HepG2 (cell line): ENCODE measurements at regions of chr2 and their contacts with region 1.

Region 1: DNA sequence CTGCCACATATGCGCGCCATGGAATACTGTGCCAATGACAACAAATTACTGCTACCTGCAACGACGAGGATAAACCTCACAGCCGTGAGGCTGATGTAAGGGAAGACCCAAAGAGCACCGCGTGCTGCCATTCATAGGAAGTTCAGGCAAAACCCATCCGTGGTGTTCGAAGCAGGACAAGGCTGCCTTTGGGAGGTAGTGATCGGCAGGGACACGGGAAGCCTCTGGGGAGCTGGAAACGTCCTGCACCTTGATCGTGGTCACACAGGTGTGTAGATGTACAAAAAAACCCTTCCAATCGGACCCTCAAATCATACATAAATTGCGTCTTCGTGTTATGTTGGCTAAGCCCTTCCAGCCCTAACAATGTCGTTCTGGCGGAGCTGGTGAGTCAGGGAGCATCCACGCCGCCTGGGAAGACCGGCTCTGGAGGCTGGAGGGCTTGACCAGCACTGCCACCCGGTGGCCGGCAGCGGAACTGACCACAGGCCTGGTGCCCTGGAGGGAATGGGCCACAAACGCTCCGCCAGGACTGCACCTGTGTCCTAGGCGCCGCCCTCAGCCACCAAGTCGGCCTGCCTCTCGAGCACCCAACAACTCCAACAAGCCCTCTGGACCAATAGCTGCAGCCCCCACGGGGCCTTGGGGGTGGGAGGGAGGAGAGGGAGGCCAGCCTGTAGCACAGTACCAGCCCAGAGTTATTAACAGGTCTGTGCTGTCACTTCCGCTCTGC is 4.1 kb upstream of the NEURL3 start:
- DNase-seq: peak; percentile 78
- ATAC-seq: peak; percentile 79
- H3K4me3 ChIP-seq: peak overlapping the region in 1 of 3 experiments; percentile 36; a peak in 1 of 6 replicates
- H3K27ac ChIP-seq: no peak overlapping the region
- H3K4me1 ChIP-seq: peaks cover 51% of the 10 kb centered on the region
- H3K27me3 ChIP-seq: peaks cover 0 to 37% of the 10 kb centered on the region in 2 experiments; a peak in 3 of 5 replicates
- CTCF ChIP-seq: peak; percentile 100
- EP300 ChIP-seq: no peak; a peak in 1 of 4 replicates
- POLR2A ChIP-seq: no peak
- RAD21 ChIP-seq: peak; percentile 100

Region 2: DNA sequence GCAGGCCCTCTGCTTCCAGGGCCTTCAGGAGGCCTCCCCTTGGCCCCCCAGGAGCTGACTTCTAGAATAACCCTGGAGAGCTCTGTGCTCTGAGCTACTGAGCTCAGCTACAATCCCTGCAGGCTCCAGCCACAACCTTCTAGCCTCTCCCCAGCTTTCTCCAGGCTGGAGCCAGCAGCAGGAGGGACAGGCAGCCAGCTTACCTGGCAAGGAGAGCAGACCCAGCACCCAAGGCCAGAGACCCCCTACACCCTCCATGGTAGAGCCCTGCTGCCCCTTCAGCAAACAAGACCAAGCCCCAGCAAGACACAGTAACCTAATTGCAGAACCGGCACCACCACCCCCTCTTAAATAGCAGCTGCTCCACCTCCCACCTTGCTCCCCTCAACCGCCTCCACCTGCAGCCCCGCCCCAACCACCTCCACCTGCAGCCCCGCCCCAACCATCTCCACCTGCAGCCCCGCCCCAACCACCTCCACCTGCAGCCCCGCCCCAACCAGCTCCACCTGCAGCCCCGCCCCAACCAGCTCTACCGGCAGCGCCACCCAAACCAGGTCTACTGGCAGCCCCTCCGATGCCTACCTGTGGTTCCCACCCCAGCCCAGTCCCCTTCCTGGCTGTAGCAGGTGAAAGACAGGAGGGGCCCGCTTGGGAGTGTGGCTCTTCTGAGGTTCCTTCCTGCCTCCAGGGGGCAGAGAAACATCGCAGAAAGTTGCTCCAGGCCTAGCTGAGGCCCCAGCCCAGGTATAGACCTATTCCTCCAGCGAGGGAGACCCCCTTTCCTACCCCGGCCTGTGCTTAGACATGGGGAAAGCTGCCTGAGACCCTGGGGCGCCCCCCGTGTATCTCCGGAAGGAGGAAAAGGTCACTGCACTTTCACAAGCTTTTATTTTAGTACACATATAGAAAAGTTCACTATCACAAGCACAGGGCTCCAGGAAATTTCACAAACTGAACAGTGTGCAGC is 370.8 kb before region 1 on chr2 and contains the start of gene ASTL:
- CTCF ChIA-PET with region 1: interaction called, 6 read pairs
- POLR2A ChIA-PET with region 1: no interaction called
- in situ Hi-C with region 1: loop called (anchors 25 kb)
- intact Hi-C with region 1: loop called (anchors 1 kb)
- DNase-seq: peak; percentile 56
- ATAC-seq: peak; percentile 84
- H3K4me3 ChIP-seq: no peak within 1 kb of the TSS
- H3K27ac ChIP-seq: no peak within 1 kb of the TSS
- H3K4me1 ChIP-seq: no peaks in the 10 kb centered on the region
- H3K27me3 ChIP-seq: peaks cover 20 to 62% of the 10 kb centered on the region in 2 experiments
- CTCF ChIP-seq: peak; percentile 87
- EP300 ChIP-seq: no peak
- POLR2A ChIP-seq: no peak
- RAD21 ChIP-seq: peak; percentile 79
- total RNA-seq, gene ASTL: not detected in 2 replicates

Region 3: DNA sequence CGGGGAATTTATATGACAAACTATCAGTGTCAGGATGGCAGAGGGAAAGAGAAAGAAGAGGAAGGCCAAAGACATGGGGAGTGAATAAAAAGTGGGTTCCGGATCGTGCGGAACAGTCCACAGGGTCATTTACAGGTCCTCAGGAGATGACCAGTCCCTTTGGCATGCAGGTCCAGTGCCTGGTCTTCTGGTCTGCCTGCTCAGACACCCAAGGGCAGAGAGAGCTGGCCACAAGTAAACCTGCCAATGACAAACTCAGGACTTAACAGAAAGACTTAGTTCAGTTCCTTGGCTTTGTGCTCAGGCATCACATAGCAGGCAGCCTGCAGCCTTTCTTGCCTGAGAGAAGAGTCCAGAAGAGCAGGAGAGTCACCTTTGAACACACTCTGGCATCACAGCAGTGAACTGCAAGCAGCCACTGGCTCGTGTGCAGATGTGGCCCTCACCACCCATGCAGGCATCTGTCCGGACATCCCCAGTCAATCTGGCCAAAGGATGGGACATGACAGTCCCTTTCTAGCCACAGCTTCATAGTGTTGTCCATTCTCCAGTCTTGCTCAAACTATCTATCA is 257.5 kb before region 1 on chr2:
- CTCF ChIA-PET with region 1: no interaction called
- POLR2A ChIA-PET with region 1: no interaction called
- in situ Hi-C with region 1: no loop called
- intact Hi-C with region 1: loop called (anchors 5 kb)
- DNase-seq: peak; percentile 84
- ATAC-seq: peak; percentile 79
- H3K4me3 ChIP-seq: no peak overlapping the region
- H3K27ac ChIP-seq: no peak overlapping the region
- H3K4me1 ChIP-seq: peaks cover 25% of the 10 kb centered on the region
- H3K27me3 ChIP-seq: no peaks in the 10 kb centered on the region
- CTCF ChIP-seq: 0 out of 2 replicates have a peak, but pooled peaks have one; percentile 17
- EP300 ChIP-seq: 0 out of 4 replicates have a peak, but pooled peaks of 1 of the 2 experiments have one; percentile 18
- POLR2A ChIP-seq: 0 out of 4 replicates have a peak, but pooled peaks of 1 of the 2 experiments have one; percentile 17
- RAD21 ChIP-seq: peak; percentile 52; the same call in 1 of the 2 replicates

Region 4: GRCh38 chr2:96305091-96305978 is 203.9 kb before region 1 on chr2 and contains the start of gene SNRNP200:
- CTCF ChIA-PET with region 1: interaction called, 4 read pairs
- POLR2A ChIA-PET with region 1: no interaction called
- in situ Hi-C with region 1: no loop called
- intact Hi-C with region 1: loop called (anchors 1 kb)
- DNase-seq: peak; percentile 86
- ATAC-seq: peak; percentile 98
- H3K4me3 ChIP-seq: peak within 1 kb of the TSS; percentile 79 to 92 (median 91)
- H3K27ac ChIP-seq: peak within 1 kb of the TSS; percentile 75
- H3K4me1 ChIP-seq: peaks cover 37% of the 10 kb centered on the region
- H3K27me3 ChIP-seq: no peaks in the 10 kb centered on the region; a peak in 1 of 5 replicates
- CTCF ChIP-seq: peak; percentile 31
- EP300 ChIP-seq: no peak
- POLR2A ChIP-seq: peak; percentile 88 to 95
- RAD21 ChIP-seq: peak; percentile 37; the same call in 1 of the 2 replicates
- total RNA-seq, gene SNRNP200: 99.0 and 163 TPM in 2 replicates

Region 5: GRCh38 chr2:96413323-96413722 is 96.0 kb before region 1 on chr2:
- CTCF ChIA-PET with region 1: interaction called, 116 read pairs
- POLR2A ChIA-PET with region 1: interaction called, 15 read pairs
- in situ Hi-C with region 1: loop called (anchors 5 kb)
- intact Hi-C with region 1: no loop called
- DNase-seq: peak; percentile 46
- ATAC-seq: peak; percentile 81
- H3K4me3 ChIP-seq: peak overlapping the region; percentile 52 to 86 (median 62)
- H3K27ac ChIP-seq: no peak overlapping the region
- H3K4me1 ChIP-seq: peaks cover 54% of the 10 kb centered on the region
- H3K27me3 ChIP-seq: peaks cover 0 to 12% of the 10 kb centered on the region in 2 experiments; a peak in 2 of 5 replicates
- CTCF ChIP-seq: peak; percentile 33; the same call in 1 of the 2 replicates
- EP300 ChIP-seq: no peak
- POLR2A ChIP-seq: no peak
- RAD21 ChIP-seq: no peak

Region 6: DNA sequence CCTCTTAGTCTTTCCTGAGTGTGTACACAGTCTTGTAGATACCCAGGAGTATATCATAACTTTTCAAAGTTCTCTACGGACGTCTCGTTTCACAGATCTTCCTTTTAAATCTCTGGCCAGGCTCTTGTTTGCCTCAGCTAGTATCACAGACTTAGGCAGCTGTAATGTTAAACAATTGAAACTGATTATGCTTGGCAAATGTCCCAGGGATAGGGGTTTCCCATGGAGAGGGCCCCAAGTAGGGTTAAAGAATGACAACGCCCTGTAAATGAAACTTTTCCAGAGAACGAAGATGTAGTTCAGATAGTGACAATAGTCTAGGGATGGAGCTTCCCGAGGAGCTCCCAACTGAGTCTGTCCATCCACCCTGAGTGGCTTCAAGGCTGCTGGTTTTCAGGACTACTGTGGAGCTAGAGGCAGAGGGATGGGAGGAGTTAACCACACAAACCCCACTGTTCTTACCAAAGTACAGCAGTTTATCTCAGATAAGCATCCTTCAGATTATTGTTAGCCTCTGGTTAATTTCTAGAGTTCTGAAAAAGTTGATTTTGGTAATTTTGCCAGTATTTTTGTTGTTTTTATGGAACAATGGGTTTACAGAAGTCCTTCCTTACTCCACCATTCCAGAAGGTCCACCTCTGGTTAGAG is 13.2 kb before region 1 on chr2:
- CTCF ChIA-PET with region 1: no interaction called
- POLR2A ChIA-PET with region 1: no interaction called
- in situ Hi-C with region 1: no loop called
- intact Hi-C with region 1: loop called (anchors 1 kb)
- DNase-seq: no peak
- ATAC-seq: no peak
- H3K4me3 ChIP-seq: no peak overlapping the region
- H3K27ac ChIP-seq: no peak overlapping the region
- H3K4me1 ChIP-seq: peaks cover 2% of the 10 kb centered on the region
- H3K27me3 ChIP-seq: peaks cover 0 to 6% of the 10 kb centered on the region in 2 experiments; a peak in 2 of 5 replicates
- CTCF ChIP-seq: no peak
- EP300 ChIP-seq: no peak
- POLR2A ChIP-seq: no peak
- RAD21 ChIP-seq: no peak

Region 7: GRCh38 chr2:96679848-96680247 is 170.6 kb after region 1 on chr2:
- CTCF ChIA-PET with region 1: no interaction called
- POLR2A ChIA-PET with region 1: no interaction called
- in situ Hi-C with region 1: no loop called
- intact Hi-C with region 1: no loop called
- DNase-seq: no peak
- ATAC-seq: no peak
- H3K4me3 ChIP-seq: no peak overlapping the region
- H3K27ac ChIP-seq: no peak overlapping the region
- H3K4me1 ChIP-seq: peaks cover 39% of the 10 kb centered on the region
- H3K27me3 ChIP-seq: peaks cover 0 to 13% of the 10 kb centered on the region in 2 experiments; a peak in 2 of 5 replicates
- CTCF ChIP-seq: no peak
- EP300 ChIP-seq: no peak
- POLR2A ChIP-seq: no peak
- RAD21 ChIP-seq: no peak